Calu3 (cell line): ENCODE measurements at regions of chr3 and their contacts with region 1.

Region 1: GRCh38 chr3:55897573-55898224 is 410.6 kb upstream of the WNT5A start:
- DNase-seq: peak; percentile 1
- H3K4me3 Mint-ChIP-seq: no peak overlapping the region
- H3K27ac Mint-ChIP-seq: no peak overlapping the region
- H3K4me1 Mint-ChIP-seq: no peaks in the 10 kb centered on the region
- H3K27me3 Mint-ChIP-seq: no peaks in the 10 kb centered on the region
- CTCF ChIP-seq: no peak

Region 2: DNA sequence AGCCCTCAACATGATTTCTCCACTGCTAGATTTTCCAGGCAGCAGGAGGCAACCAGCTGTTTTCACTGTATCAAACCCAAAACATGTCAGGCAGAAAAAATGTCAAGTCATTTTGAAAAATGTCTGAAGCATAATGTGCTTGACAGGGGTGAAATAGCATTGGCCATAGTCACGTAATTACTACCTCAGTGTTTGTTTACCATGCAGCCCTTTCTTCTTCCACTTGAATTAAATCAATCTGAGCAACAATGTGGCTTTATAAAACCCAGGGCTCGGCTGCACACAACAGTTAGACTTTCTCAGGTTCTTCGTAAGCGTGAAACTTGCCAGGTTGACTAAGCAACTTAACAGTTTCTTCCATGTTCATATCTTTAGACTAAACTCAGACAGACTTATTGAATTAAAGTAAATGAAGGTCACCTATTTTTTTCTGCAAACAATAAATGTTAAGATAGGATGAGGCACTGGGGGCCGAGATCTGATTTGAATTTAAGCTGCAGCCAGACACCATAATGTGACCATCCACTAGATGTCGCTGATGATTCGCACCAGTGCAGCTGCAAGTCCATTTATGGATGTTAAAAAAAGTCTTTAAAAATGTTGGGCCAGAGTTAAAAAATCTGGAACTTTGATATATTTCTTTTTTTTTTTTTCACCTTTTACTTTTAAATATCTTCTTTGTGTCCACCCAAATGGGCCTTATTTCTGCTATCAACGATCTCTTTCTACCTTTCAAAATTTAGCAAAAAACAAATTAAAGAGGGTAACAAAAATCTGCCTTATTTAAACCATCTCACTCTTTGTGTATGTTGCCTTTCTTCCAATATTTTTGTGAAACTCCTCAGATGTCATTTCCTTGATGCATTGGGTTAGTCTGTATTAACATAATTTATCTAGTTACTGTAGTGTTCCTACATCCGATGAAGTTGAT is 1469.5 kb before region 1 on chr3:
- CTCF ChIA-PET with region 1: no interaction called
- intact Hi-C with region 1: loop called (anchors 5 kb)
- DNase-seq: peak; percentile 60
- H3K4me3 Mint-ChIP-seq: no peak overlapping the region
- H3K27ac Mint-ChIP-seq: no peak overlapping the region
- H3K4me1 Mint-ChIP-seq: no peaks in the 10 kb centered on the region
- H3K27me3 Mint-ChIP-seq: peaks cover 19% of the 10 kb centered on the region
- CTCF ChIP-seq: peak; percentile 54

Region 3: GRCh38 chr3:54853573-54854404 is 1043.9 kb before region 1 on chr3:
- CTCF ChIA-PET with region 1: no interaction called
- intact Hi-C with region 1: loop called (anchors 5 kb)
- DNase-seq: peak; percentile 71
- H3K4me3 Mint-ChIP-seq: no peak overlapping the region
- H3K27ac Mint-ChIP-seq: no peak overlapping the region
- H3K4me1 Mint-ChIP-seq: no peaks in the 10 kb centered on the region
- H3K27me3 Mint-ChIP-seq: peaks cover 14% of the 10 kb centered on the region
- CTCF ChIP-seq: peak; percentile 75

Region 4: DNA sequence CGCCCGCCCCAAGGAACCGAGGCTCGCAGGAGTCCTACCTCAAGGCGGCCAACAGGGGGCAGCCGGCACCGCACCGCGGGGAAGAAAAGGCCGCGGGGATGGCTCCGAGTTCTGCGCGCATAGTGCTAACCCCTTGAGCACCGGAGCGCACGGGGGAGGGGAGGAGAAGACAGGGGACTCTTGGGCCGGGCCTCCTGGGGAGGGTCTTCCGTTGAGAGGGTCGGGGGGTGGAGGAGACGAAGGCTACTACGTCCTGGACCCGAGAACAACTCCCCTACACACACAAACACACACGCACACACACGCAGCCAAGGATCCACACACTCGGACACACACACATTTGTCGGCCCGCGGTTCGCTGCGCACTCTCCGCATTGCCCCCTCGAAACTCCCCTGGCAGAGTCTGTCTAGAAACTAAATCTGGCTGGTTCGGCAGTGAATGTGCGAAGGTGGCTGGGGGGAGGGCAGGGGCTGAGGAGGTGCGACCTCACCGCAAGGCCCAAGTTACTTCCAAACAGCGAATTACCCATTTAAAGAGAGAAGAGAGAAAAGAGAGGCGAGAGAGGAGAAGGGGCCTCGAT is 412.4 kb before region 1 on chr3:
- CTCF ChIA-PET with region 1: no interaction called
- intact Hi-C with region 1: loop called (anchors 10 kb)
- DNase-seq: peak; percentile 31
- H3K4me3 Mint-ChIP-seq: no peak overlapping the region
- H3K27ac Mint-ChIP-seq: no peak overlapping the region
- H3K4me1 Mint-ChIP-seq: no peaks in the 10 kb centered on the region
- H3K27me3 Mint-ChIP-seq: peaks cover 61% of the 10 kb centered on the region
- CTCF ChIP-seq: no peak

Region 5: DNA sequence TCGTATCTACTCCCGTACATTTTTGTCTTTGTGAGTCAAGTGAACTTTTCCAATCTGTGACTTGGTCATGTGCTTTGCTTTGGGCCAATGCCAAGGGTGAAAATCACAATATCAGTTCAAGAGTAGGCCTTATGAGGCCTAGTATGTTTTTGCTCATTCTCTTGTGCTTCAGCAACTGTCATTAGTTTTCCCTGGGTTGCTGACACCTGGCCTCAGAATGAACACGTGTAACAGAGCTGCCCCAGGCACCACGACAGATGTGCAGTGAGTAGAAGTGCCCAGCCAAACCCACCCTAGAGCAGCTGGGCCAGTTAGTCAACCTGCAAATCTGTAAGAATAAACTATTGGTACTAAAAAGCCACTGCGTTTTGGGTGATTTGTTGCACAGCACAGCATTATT is 49.7 kb after region 1 on chr3:
- CTCF ChIA-PET with region 1: no interaction called
- intact Hi-C with region 1: no loop called
- DNase-seq: no peak
- H3K4me3 Mint-ChIP-seq: no peak overlapping the region
- H3K27ac Mint-ChIP-seq: no peak overlapping the region
- H3K4me1 Mint-ChIP-seq: no peaks in the 10 kb centered on the region
- H3K27me3 Mint-ChIP-seq: no peaks in the 10 kb centered on the region
- CTCF ChIP-seq: no peak